MCF 10A (cell line): ENCODE measurements at regions of chr12 and their contacts with region 1.

Region 1: GRCh38 chr12:48001505-48002413 is 2.5 kb downstream of the COL2A1 start:
- DNase-seq: peak; percentile 67
- H3K4me3 Mint-ChIP-seq: peak overlapping the region; percentile 91
- H3K27ac Mint-ChIP-seq: peak overlapping the region; percentile 87
- H3K4me1 Mint-ChIP-seq: peaks cover 5% of the 10 kb centered on the region
- H3K27me3 Mint-ChIP-seq: peaks cover 64% of the 10 kb centered on the region
- CTCF ChIP-seq: no peak

Region 2: GRCh38 chr12:48157018-48157888 is 155.5 kb after region 1 on chr12 and contains the start of gene ASB8:
- CTCF ChIA-PET with region 1: no interaction called
- POLR2A ChIA-PET with region 1: no interaction called
- intact Hi-C with region 1: loop called (anchors 5 kb)
- DNase-seq: peak; percentile 97
- H3K4me3 Mint-ChIP-seq: peak within 1 kb of the TSS; percentile 90
- H3K27ac Mint-ChIP-seq: peak within 1 kb of the TSS; percentile 91
- H3K4me1 Mint-ChIP-seq: peaks cover 4% of the 10 kb centered on the region
- H3K27me3 Mint-ChIP-seq: no peaks in the 10 kb centered on the region
- CTCF ChIP-seq: peak; percentile 8
- total RNA-seq, gene ASB8: 23.0 and 24.0 TPM in 2 replicates